ENCODE measurements at regions of chr1 and their contacts with region 1.

Region 1: DNA sequence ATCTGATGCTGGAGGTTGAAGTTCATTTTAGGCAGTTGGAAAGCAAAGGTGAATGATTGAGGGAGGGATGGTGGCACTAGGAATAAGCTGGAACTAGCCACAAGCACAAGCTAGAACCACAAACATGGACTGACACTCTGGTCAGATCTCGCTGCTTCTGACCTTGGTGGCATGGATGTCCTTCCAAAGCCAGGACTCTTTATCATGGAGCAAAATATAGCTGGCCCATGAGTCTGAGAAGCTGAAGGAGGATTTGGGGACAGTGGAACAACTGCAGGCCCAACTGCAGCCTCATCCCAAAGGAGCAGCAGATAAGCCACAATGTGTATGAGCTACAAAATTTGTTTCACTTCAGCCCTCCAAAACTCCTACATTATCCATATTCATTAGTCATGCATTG is 35.5 kb downstream of the SRSF11 start:
- DNase-seq: no peak
- H3K4me3 ChIP-seq: no peak overlapping the region
- H3K27ac ChIP-seq: no peak overlapping the region
- H3K4me1 ChIP-seq: no peaks in the 10 kb centered on the region
- CTCF ChIP-seq: no peak

Region 2: DNA sequence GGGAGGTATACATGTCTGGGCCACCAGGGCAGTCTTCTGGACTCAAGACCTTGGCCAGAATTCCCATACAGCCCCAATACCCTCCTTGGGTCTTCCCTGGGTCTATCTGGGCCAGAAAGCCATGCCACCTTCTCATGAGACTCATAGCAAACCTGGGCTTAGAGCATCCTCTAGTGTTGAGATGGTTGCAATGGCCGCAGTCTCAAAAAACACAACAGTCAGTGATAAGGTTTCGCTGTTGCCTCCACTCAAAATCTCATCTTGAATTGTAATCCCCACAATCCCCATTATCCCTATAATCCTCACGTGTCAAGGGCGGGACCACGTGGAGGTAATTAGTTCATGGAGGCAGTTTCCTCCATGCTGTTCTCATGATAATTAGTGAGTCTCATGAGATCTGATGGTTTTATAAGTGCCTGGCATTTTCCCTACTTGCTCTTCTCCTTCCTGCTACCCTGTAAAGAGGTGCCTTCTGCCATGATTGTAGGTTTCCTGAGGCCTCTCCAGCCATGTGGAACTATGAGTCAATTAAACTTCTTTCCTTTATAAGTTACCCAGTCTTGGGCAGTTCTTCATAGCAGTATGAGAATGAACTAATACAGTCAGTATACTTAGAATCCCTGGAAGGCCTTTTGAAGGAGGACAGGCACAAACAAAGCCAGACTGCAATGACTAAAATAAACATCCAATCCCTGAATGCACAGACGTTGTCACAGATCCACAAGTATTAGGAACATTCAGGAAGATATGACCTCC is 231.4 kb after region 1 on chr1:
- CTCF ChIA-PET with region 1: no interaction called
- POLR2A ChIA-PET with region 1: no interaction called
- intact Hi-C with region 1: loop called (anchors 10 kb)
- DNase-seq: peak; percentile 56
- H3K4me3 ChIP-seq: no peak overlapping the region
- H3K27ac ChIP-seq: no peak overlapping the region
- H3K4me1 ChIP-seq: no peaks in the 10 kb centered on the region
- CTCF ChIP-seq: peak; percentile 85

Measured in OCI-LY7 (cell line).